Breast epithelium (tissue), 4 donors: ENCODE measurements at regions of chr13 and their contacts with region 1.

Region 1: GRCh38 chr13:23202383-23202782 is 21.6 kb downstream of the SGCG start:
- DNase-seq: no peak
- H3K4me3 ChIP-seq: no peak overlapping the region
- H3K27ac ChIP-seq: no peak overlapping the region
- H3K4me1 ChIP-seq: no peaks in the 10 kb centered on the region
- H3K27me3 ChIP-seq: no peaks in the 10 kb centered on the region
- CTCF ChIP-seq: no peak
- POLR2A ChIP-seq: no peak

Region 2: DNA sequence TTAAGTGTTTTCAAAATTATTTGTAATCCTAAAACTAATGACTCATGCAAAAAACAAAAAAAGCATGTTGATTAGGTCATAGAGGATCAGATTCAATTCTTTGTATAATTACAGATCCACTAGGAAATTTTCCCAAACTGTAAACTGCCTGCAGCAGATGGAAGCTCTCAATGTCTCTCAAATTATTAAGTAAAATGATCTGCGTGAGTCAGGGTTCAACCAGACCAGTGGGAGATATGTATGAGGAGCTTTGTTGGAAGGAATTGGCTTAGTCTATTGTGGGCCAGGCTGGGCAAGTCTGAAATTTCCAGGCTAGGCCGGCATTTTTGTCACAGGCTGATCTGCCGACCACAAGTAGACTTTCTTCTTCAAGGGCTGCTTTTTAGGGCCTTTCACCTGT is 245.5 kb after region 1 on chr13:
- intact Hi-C with region 1: loop called (anchors 10 kb)
- DNase-seq: no peak
- H3K4me3 ChIP-seq: no peak overlapping the region
- H3K27ac ChIP-seq: no peak overlapping the region
- H3K4me1 ChIP-seq: no peaks in the 10 kb centered on the region
- H3K27me3 ChIP-seq: no peaks in the 10 kb centered on the region
- CTCF ChIP-seq: no peak
- POLR2A ChIP-seq: no peak